AG04450 (cell line): ENCODE measurements at regions of chr7 and their contacts with region 1.

Region 1: DNA sequence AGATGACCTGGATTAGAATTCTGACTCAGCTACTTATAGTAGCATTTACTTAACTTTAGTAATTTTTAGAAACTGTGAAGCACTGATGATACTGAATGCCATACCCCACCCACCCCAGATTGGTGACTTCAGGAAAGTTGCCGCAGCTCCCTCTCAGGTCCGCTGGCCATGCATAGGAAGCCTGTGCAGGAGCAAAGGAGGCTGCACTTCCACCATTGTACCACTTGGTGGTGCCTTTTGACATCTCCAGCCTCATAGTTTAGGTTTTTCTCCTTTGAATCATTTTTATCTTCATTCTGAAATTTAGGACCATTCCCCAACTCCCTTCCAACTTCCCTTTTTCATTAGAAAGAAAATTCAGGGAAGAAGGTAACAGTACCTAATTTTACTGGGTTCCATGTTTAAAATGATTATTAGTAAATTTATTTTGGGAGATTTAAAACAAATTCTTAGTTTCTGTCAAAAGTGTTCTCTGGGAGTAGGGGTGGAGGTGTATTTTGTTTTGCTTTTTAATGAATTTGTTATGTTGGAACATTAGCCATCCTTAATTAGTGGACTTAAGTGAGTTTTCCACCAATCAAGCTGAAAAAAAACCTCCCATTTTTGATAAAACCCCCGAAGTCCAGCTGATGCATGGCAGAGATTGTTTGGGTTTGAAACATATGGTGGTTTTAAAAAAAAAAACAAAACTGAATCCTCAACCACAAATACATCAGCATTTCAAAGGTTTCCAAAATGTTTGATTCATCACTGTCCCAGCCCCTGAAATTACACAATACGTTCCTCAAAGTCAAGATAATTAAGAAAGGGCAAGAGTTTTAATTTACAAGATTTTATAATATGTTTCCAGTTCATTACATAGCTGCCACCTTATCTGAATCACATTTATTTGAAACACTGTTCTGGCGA is 109.6 kb downstream of the WNT2 start:
- DNase-seq: no peak
- H3K4me3 ChIP-seq: no peak overlapping the region
- H3K27ac ChIP-seq: no peak overlapping the region
- H3K27me3 ChIP-seq: no peaks in the 10 kb centered on the region
- CTCF ChIP-seq: peak; percentile 98

Region 2: GRCh38 chr7:117202511-117202910 is 10.7 kb before region 1 on chr7:
- CTCF ChIA-PET with region 1: interaction called, 30 read pairs
- POLR2A ChIA-PET with region 1: no interaction called
- DNase-seq: no peak
- H3K4me3 ChIP-seq: no peak overlapping the region
- H3K27ac ChIP-seq: no peak overlapping the region
- H3K27me3 ChIP-seq: no peaks in the 10 kb centered on the region
- CTCF ChIP-seq: no peak

Region 3: DNA sequence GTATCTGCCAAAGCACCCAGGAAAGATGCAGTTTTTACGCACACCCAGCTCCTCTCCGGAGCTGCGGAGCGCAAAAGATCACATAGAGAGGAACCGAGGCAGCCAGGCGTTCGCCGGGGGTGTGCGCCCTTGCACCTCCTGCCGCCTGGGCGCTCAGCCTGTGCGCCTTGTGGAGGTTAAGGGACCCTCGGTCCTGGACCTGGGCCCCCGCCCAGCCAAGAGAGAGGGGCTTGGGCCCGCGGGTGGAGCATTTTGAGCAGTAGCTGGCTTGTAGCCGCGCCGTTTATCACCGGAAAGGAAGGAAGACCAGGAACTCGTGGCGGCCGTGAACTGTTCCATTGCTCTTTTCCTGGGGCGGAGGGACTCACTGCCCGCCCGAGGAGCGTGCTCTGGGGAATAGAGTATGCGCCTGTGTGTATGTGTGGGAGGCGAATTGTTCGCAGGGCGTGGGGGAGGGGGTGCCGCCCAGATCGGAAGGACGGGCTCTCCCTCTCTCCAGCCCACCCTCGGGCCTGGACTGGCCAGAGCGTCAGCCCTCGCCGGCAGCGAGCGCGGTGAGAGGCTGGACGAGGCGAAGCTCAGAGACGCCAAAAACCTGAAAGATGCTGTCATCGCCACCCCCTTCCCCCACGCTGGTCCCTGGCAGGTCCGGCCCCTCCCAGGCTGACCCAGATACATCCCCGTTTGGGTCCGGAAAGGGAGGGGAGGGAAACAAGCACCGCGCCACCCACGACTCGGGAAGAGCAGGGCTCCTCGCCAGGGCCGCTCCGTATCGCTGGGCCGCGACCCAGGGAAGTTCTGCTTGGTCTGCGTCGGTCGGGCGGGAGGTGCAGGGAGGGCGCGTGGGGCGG is 110.9 kb after region 1 on chr7:
- CTCF ChIA-PET with region 1: interaction called, 12 read pairs
- POLR2A ChIA-PET with region 1: no interaction called
- DNase-seq: peak; percentile 56
- H3K4me3 ChIP-seq: peak overlapping the region; percentile 62
- H3K27ac ChIP-seq: peak overlapping the region; percentile 57
- H3K27me3 ChIP-seq: peaks cover 27% of the 10 kb centered on the region
- CTCF ChIP-seq: no peak

Region 4: GRCh38 chr7:117375380-117375779 is 162.2 kb after region 1 on chr7:
- CTCF ChIA-PET with region 1: interaction called, 21 read pairs
- POLR2A ChIA-PET with region 1: no interaction called
- DNase-seq: no peak
- H3K4me3 ChIP-seq: no peak overlapping the region
- H3K27ac ChIP-seq: no peak overlapping the region
- H3K27me3 ChIP-seq: no peaks in the 10 kb centered on the region
- CTCF ChIP-seq: peak; percentile 43